Natural killer cell (primary cell): ENCODE measurements at regions of chr17 and their contacts with region 1.

Region 1: GRCh38 chr17:47205419-47205963 is 3.7 kb upstream of the MYL4 start:
- DNase-seq: peak in 1 of 2 donors; percentile 87
- ATAC-seq: peak; percentile 42 to 79 (median 75)
- H3K4me3 ChIP-seq: peak overlapping the region; percentile 30
- H3K4me3 Mint-ChIP-seq: peak overlapping the region; percentile 72
- H3K27ac ChIP-seq: peak overlapping the region; percentile 95
- H3K27ac Mint-ChIP-seq: peak overlapping the region; percentile 86 to 90
- H3K4me1 ChIP-seq: peaks cover 36% of the 10 kb centered on the region
- H3K4me1 Mint-ChIP-seq: peaks cover 29 to 30% of the 10 kb centered on the region in 2 donors
- H3K27me3 ChIP-seq: no peaks in the 10 kb centered on the region
- H3K27me3 Mint-ChIP-seq: no peaks in the 10 kb centered on the region
- CTCF ChIP-seq: no peak

Region 2: GRCh38 chr17:47099987-47100711 is 105.3 kb before region 1 on chr17:
- intact Hi-C with region 1: no loop called
- DNase-seq: peak; percentile 92
- ATAC-seq: peak; percentile 99 to 100 (median 99)
- H3K4me3 ChIP-seq: peak overlapping the region; percentile 50
- H3K4me3 Mint-ChIP-seq: peak overlapping the region; percentile 100
- H3K27ac ChIP-seq: peak overlapping the region; percentile 74
- H3K27ac Mint-ChIP-seq: peak overlapping the region; percentile 90 to 92
- H3K4me1 ChIP-seq: peaks cover 19% of the 10 kb centered on the region
- H3K4me1 Mint-ChIP-seq: peaks cover 12 to 18% of the 10 kb centered on the region in 2 donors
- H3K27me3 ChIP-seq: no peaks in the 10 kb centered on the region
- H3K27me3 Mint-ChIP-seq: no peaks in the 10 kb centered on the region
- CTCF ChIP-seq: no peak

Region 3: DNA sequence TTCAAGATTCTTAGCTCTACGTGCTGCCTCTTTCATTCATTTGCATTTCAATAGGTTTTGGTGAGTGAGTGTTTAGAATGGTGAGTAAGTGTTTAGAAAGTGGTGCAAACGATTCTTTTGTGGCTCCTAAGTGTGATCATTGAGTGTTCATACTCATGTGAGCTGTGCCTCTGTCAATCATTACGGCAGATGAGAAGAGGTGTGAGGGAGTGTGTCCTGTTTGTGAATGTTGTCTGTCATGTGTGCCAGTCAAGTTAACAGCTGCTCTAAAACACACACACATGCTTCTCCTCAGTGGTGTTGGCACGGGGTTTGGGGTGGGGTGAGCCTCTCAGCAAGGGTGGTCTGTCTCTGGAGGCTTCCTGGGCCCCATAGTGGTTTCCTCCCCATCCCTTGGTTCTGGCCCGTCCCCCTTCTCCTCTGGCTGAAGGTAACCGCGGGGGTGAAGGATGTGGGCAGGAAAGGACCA is 15.1 kb after region 1 on chr17:
- intact Hi-C with region 1: loop called (anchors 1 kb)
- DNase-seq: peak; percentile 49 to 67
- ATAC-seq: peak; percentile 83 to 87 (median 86)
- H3K4me3 ChIP-seq: no peak overlapping the region
- H3K4me3 Mint-ChIP-seq: peak overlapping the region; percentile 81
- H3K27ac ChIP-seq: peak overlapping the region; percentile 42
- H3K27ac Mint-ChIP-seq: peak overlapping the region; percentile 83 to 87
- H3K4me1 ChIP-seq: peaks cover 52% of the 10 kb centered on the region
- H3K4me1 Mint-ChIP-seq: peaks cover 32 to 42% of the 10 kb centered on the region in 2 donors
- H3K27me3 ChIP-seq: no peaks in the 10 kb centered on the region
- H3K27me3 Mint-ChIP-seq: no peaks in the 10 kb centered on the region
- CTCF ChIP-seq: no peak